ENCODE measurements at regions of chr3 and their contacts with region 1.

Region 1: DNA sequence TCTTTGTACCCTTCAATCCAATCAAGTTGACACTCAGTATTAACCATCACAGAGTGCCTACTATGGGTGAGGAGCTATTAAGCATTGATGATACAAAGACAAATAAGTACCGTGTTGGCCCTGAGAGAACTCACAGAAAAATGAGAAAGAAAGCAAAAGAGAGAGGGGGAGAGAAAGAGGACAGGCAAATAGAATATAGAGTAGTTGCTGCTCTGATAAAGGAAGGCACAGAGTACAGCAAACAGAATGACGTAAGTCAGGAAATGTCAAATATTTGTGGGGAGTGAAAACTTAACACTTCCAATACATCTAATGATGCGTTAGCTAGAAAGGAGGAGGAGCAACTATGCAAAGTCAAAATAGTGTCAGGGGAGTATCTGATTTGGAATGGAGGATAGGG is 320.6 kb upstream of the KCNH8 start:
- DNase-seq: no peak
- H3K4me3 ChIP-seq: no peak overlapping the region
- H3K27ac ChIP-seq: no peak overlapping the region
- H3K4me1 ChIP-seq: no peaks in the 10 kb centered on the region
- H3K27me3 ChIP-seq: no peaks in the 10 kb centered on the region
- CTCF ChIP-seq: no peak
- EP300 ChIP-seq: no peak
- POLR2A ChIP-seq: no peak

Region 2: GRCh38 chr3:17190353-17191078 is 1637.1 kb before region 1 on chr3:
- in situ Hi-C with region 1: no loop called
- intact Hi-C with region 1: loop called (anchors 5 kb)
- DNase-seq: no peak
- H3K4me3 ChIP-seq: no peak overlapping the region
- H3K27ac ChIP-seq: no peak overlapping the region
- H3K4me1 ChIP-seq: peaks cover 0 to 3% (median 0%) of the 10 kb centered on the region in 4 donors
- H3K27me3 ChIP-seq: no peaks in the 10 kb centered on the region
- CTCF ChIP-seq: no peak
- EP300 ChIP-seq: no peak
- POLR2A ChIP-seq: no peak

Region 3: DNA sequence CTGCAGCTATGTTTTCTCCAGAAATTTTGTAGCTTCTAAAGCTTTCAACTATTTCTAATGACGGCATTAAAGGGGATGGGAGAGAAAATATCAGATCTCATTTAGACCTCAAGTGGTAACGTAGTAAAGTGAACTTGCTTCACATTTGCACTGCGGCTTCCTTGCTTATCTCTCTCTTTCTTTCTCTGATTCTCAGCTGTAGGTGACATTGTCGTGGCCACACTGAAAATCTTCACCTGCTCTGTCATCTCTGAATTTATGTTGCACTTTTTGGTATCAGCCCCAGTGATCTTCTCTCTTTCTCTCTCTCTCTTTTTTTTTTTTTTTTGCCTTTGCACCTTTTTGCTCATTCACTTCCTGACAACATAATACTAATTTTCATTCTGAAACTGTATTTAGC is 148.4 kb before region 1 on chr3:
- in situ Hi-C with region 1: no loop called
- intact Hi-C with region 1: no loop called
- DNase-seq: no peak
- H3K4me3 ChIP-seq: no peak overlapping the region
- H3K27ac ChIP-seq: no peak overlapping the region
- H3K4me1 ChIP-seq: no peaks in the 10 kb centered on the region
- H3K27me3 ChIP-seq: no peaks in the 10 kb centered on the region
- CTCF ChIP-seq: no peak
- EP300 ChIP-seq: no peak
- POLR2A ChIP-seq: no peak

Region 4: GRCh38 chr3:19074257-19074900 is 246.7 kb after region 1 on chr3:
- in situ Hi-C with region 1: no loop called
- intact Hi-C with region 1: no loop called
- DNase-seq: no peak
- H3K4me3 ChIP-seq: no peak overlapping the region
- H3K27ac ChIP-seq: no peak overlapping the region
- H3K4me1 ChIP-seq: no peaks in the 10 kb centered on the region
- H3K27me3 ChIP-seq: no peaks in the 10 kb centered on the region
- CTCF ChIP-seq: no peak
- EP300 ChIP-seq: no peak
- POLR2A ChIP-seq: no peak